ENCODE measurements at regions of chr6 and their contacts with region 1.

Region 1: GRCh38 chr6:31769684-31770371 is 7.3 kb downstream of the VWA7 start:
- DNase-seq: peak; percentile 45 to 93
- H3K4me3 ChIP-seq: no peak overlapping the region
- CTCF ChIP-seq: peak in 1 of 3 donors; percentile 32
- POLR2A ChIP-seq: no peak

Region 2: DNA sequence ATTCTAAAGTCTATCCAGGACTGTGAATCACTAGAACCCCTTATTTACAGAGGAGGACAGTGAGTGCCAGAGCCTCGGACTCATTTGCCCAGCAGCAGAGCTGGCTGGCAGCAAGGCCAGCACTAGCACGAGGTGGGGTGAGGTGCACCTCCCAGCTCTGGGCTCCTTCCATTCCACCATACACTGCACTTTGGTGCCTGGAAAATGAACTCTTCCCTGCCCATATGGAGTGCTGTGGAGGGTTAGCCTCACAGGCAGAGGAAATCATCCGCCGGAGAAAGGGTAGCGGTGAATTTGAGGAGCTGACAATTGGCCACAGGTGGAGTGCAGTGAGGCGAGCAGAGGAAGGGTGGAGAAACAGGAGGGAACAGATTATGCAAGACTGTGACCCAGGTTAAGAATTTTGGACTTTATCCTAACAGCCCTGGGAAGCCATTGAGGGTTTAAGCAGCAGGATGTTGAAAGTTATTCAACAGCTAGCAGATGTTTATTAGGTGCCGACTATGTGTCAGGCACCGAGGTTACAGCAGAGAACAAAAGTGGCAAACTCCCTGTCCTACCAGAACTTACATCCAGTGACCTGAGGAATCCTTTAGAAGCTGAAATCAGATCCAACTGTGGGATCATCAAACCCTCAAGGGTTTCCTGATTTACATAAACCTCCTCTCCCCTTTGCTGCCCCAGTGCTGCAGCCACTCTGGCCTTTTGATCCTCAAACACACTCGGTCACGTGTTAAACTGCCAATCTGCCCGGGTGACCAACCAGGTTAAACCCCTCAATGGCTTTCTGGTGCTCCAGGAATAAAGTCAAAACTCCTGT is 1562.8 kb before region 1 on chr6:
- intact Hi-C with region 1: no loop called
- DNase-seq: peak in 1 of 2 donors; percentile 23
- H3K4me3 ChIP-seq: no peak overlapping the region
- CTCF ChIP-seq: no peak
- POLR2A ChIP-seq: no peak

Region 3: DNA sequence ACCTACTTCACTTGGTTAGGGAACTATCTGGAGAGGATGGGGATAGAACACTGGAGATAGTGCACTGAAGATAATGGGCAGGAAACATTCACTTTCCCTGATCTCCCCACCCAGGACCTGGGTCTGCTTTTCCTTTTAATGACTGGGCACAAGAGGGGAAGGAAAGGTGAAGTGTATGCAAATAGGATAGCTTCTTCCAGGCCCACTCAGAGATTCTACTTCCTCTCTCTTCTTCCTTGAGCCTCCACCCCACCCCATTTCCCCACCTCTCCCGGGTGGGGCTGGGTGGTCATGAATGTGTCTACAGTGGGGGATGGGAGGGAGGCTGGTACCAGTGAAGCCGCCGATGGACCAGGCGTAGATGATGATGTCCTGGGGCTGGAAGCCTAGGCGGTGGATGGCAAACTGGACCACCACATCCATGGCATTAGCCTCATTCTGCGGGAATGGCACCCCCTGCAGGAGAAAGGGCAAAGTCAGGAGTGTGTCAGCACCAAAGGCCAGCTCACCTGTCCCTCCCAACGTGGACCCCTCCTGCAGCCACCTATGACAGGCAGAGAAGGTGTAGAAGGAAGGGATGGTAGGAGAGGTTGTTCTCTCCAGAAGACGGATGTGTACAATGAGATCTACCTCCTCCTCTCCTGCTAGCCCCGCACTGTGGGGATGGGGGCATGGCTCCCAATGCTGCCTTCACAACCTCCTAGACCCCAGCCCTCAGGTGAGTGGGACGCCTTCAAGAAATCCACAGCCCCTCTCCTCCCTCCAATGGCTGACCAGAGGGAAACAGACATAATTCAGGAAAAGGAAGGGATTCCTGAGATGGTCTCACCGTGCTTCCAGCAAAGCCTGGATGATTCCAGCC is 80.3 kb before region 1 on chr6:
- intact Hi-C with region 1: loop called (anchors 5 kb)
- DNase-seq: no peak
- H3K4me3 ChIP-seq: no peak overlapping the region
- CTCF ChIP-seq: no peak
- POLR2A ChIP-seq: no peak

Region 4: DNA sequence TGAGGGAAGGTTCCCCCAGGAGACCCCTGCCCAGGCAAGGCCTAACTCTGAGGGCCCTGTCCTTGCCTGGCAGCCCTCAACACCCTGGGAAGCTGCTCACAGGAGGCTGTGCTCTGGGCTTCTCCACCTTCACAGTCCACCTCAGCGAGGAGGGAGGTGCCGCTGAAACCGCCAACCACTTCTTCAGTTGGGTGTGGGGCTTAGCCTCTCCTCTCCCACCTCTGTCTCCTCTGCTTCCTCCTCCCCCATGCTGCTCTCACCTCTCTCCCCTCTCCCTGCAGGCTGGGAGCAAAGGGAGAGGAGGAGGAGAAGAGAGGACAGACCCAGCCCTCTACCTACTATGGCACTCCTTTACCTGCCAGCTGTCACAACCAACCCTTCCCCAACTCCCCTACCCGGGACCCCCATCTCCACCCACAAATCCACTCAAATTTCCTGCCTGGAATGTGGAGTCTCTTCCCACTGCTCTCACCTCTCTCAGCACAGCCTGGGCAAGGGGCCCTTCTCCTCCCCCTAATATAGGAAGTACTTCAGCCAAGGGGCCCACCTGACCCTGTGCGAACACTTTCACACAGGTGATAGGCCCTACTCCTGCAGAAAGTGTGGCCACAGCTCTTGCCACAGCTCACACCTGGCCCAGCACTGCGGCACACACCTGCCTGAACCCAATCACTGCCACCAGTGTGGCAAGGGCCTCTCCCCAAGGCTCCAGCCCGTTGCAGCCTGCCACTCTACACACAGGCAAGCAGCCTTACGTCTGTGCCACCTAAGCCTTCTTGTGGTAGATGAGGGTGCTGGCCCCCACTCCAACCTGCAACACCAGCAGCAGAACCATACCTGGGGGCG is 1445.7 kb after region 1 on chr6:
- intact Hi-C with region 1: loop called (anchors 5 kb)
- DNase-seq: peak in 1 of 2 donors; percentile 61
- H3K4me3 ChIP-seq: no peak overlapping the region
- CTCF ChIP-seq: no peak
- POLR2A ChIP-seq: no peak

Measured in lower leg skin (tissue), 4 donors.